ENCODE measurements at regions of chr3 and their contacts with region 1.

Region 1: DNA sequence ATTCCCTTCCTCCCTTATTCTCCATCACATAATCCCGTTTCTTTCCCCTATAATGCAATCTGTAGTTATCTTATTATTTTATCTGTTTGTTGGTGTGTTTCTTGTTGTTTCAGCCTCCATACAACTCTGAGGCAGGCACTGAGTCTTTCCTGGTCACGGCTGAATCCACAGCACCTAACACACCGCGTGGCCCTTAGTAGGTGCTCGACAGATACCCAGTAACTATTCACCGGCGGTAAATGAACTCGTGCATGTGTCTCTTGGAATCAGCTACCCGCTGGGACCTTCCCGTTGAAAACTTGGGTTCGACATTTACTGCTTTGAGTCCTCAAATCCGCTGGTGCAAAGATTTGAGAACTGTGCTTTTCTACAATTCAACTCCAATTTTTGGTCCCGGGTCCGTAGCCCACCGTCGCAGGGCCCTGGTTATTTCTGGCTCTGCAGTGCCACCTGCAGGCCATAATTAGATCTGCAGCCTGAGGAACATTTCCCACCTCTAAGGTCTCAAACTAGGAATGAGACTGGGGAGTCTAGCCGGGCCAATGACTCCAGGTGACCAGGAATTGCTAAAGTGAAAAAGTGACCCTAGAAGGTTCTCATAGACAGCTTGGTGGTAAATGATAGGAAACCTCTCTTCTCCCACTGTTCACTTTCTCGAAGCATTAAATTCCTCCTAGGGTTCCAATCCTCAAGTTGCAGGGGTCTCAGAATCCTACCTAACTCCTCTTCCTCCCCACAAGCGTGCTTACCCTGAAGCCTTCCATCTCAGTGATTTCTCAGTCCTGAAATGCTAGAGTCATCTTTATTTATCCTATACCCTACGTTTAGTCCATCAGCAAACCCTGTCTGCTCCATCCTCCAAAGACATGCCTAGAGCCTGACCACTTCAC is 40.0 kb upstream of the TRH start:
- DNase-seq: peak; percentile 38
- H3K4me3 Mint-ChIP-seq: no peak overlapping the region
- H3K27ac Mint-ChIP-seq: no peak overlapping the region
- H3K4me1 Mint-ChIP-seq: peaks cover 2% of the 10 kb centered on the region
- H3K27me3 Mint-ChIP-seq: no peaks in the 10 kb centered on the region

Region 2: DNA sequence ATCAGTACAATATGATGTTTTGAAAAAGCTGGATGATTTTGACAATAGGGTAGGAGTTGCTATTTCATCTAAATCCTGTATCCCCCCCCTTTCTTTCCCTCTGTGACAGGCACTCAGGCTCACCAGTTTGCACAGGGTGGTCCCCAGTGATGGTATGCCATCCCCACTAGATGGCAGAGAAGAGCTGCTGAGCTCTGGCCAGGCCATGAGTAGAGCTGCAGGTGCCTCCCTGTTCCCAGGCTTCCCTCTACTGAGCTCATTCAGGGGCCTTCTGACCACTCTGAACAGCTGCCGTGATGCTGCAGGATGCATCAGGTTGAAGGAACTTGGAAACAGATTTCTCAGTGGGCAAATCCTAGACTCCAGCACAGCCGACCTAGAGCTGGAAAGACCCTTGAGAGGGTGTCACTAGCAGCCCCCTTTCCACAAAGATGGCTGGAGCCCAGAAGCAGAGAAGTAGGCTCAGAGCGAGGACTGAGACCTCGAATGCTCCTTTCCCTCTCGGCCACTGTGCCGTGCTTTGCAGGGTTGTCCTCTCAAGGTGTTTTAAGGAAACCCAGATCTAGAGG is 551.1 kb before region 1 on chr3:
- CTCF ChIA-PET with region 1: no interaction called
- intact Hi-C with region 1: loop called (anchors 10 kb)
- DNase-seq: peak; percentile 65
- H3K4me3 Mint-ChIP-seq: no peak overlapping the region
- H3K27ac Mint-ChIP-seq: no peak overlapping the region
- H3K4me1 Mint-ChIP-seq: no peaks in the 10 kb centered on the region
- H3K27me3 Mint-ChIP-seq: no peaks in the 10 kb centered on the region

Region 3: DNA sequence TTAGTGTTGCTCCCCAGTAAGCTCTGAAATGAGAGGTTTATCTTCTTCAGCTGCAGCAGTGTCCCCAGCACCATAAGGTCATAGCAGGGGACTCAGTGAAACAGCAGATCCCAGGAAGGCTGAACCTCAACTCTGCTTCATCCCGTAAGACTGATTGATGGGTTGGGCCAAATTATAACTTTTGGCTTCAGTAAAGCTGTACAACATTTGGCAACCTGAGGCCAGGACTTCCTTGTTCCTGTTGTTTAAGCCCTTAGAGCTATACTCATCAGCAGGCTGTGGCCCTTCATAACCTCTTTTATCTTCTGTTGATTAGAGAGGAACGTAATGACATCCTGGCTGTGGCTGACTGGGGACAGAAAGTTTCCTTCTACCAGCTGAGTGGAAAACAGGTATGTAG is 465.5 kb before region 1 on chr3:
- CTCF ChIA-PET with region 1: no interaction called
- intact Hi-C with region 1: no loop called
- DNase-seq: no peak
- H3K4me3 Mint-ChIP-seq: no peak overlapping the region
- H3K27ac Mint-ChIP-seq: no peak overlapping the region
- H3K4me1 Mint-ChIP-seq: peaks cover 8% of the 10 kb centered on the region
- H3K27me3 Mint-ChIP-seq: no peaks in the 10 kb centered on the region

Region 4: DNA sequence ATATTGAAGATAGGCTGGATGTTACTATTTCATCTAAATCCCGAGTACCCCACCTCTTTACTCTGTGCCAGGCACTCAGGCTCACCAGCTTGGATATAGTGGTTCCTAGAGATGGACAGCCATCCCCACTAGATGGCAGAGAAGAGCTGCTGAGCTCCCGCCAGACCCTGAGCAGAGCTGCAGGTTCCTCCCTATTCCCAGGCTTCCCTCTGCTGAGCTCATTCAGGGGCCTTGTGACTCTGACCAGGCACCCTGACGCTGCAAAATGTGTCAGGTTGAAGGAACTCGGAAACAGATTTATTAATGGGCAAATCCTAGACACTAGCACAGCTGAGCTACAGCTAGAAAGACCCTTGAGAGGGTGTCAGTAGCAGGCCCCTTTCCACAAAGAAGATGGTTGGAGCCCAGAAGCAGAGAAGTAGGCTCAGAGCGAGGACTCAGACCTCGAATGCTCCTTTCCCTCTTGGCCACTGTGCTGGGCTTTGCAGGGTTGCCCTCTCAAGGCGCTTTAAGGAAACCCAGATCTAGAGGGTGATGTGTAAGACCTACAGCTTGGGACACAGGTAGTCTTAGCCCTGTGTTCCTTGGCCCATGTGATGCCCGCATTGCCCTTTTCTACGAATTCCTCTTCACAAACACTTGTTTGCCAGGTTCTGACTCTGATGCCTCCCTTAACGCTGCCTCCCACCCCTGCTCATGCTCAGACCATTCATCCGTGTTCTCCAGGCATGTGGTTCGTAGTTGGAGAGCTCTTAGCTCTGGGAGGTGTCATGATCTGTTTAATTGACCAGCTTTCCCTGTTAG is 444.0 kb before region 1 on chr3:
- CTCF ChIA-PET with region 1: interaction called, 4 read pairs
- intact Hi-C with region 1: loop called (anchors 1 kb)
- DNase-seq: peak; percentile 67
- H3K4me3 Mint-ChIP-seq: no peak overlapping the region
- H3K27ac Mint-ChIP-seq: no peak overlapping the region
- H3K4me1 Mint-ChIP-seq: no peaks in the 10 kb centered on the region
- H3K27me3 Mint-ChIP-seq: no peaks in the 10 kb centered on the region

Region 5: GRCh38 chr3:129650256-129650872 is 284.1 kb before region 1 on chr3:
- CTCF ChIA-PET with region 1: interaction called, 3 read pairs
- intact Hi-C with region 1: loop called (anchors 1 kb)
- DNase-seq: peak; percentile 83
- H3K4me3 Mint-ChIP-seq: no peak overlapping the region
- H3K27ac Mint-ChIP-seq: no peak overlapping the region
- H3K4me1 Mint-ChIP-seq: peaks cover 1% of the 10 kb centered on the region
- H3K27me3 Mint-ChIP-seq: no peaks in the 10 kb centered on the region

Region 6: DNA sequence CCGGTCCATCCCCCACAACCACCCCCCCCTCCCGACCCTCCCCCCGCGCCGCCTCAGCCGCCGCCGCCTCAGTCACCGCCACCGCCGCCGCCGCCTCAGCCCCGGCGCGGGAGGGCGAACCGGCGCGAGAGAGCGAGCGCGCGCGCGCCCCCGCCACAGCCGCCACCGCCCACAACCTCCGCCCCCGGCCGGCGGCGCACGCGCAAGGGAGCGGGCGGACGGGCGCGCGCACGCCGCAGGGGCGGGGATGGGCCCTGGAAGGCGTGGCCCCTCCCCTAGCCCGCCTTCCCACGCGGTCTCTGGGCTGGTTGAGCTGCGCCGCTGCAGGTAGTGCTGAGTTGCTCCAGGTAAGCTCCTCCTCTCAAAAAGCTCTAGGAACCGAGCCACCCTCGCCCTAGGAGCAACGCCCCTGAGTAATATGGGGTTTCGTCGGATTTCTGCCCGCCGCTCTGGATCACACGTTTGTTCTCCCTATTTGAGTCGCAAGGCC is 40.9 kb before region 1 on chr3 and contains the start of gene TMCC1:
- CTCF ChIA-PET with region 1: no interaction called
- intact Hi-C with region 1: loop called (anchors 2 kb)
- DNase-seq: peak; percentile 87
- H3K4me3 Mint-ChIP-seq: peak within 1 kb of the TSS; percentile 92
- H3K27ac Mint-ChIP-seq: peak within 1 kb of the TSS; percentile 70
- H3K4me1 Mint-ChIP-seq: peaks cover 38% of the 10 kb centered on the region
- H3K27me3 Mint-ChIP-seq: no peaks in the 10 kb centered on the region
- total RNA-seq, gene TMCC1: 13.6 to 14.3 TPM

Measured in activated naive CD4-positive, alpha-beta T cell treated with anti-CD3 and anti-CD28 coated beads for 36 hours (primary cell).